Right cardiac atrium (tissue), 5 donors: ENCODE measurements at regions of chr19 and their contacts with region 1.

Region 1: GRCh38 chr19:36819130-36819630 is 19.0 kb downstream of the ZNF790 start:
- DNase-seq: no peak
- ATAC-seq: no peak
- H3K4me3 ChIP-seq: peak overlapping the region; percentile 38
- H3K27ac ChIP-seq: no peak overlapping the region
- H3K4me1 ChIP-seq: no peaks in the 10 kb centered on the region
- H3K27me3 ChIP-seq: no peaks in the 10 kb centered on the region

Region 2: GRCh38 chr19:36687214-36688056 is 131.7 kb before region 1 on chr19 and contains the start of gene ZNF567:
- intact Hi-C with region 1: no loop called
- DNase-seq: peak; percentile 98 to 99 (median 99)
- ATAC-seq: peak; percentile 99 to 100
- H3K4me3 ChIP-seq: peak within 1 kb of the TSS; percentile 61
- H3K27ac ChIP-seq: peak within 1 kb of the TSS; percentile 61
- H3K4me1 ChIP-seq: peaks cover 5% of the 10 kb centered on the region
- H3K27me3 ChIP-seq: no peaks in the 10 kb centered on the region
- total RNA-seq, gene ZNF567: 4.0 to 5.8 (median 5.3) TPM

Region 3: DNA sequence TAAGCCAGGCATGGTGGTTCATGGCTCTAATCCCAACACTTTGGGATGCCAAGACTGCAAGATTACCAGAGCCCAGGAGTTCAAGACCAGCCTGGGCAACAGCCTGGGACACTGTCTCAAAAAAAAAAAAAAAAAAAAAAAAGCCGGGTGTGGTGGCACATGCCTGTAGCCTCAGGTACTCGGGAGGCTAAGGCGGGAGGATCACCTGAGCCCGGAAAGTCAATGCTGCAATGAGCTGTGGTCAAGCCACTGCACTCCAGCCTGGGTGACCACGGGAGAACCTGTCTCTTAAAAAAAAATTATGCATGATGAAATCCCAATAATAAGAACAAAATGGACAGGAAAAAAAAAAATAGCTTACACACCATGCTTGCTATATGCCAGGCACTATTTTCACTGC is 65.9 kb before region 1 on chr19:
- intact Hi-C with region 1: no loop called
- DNase-seq: no peak
- ATAC-seq: no peak
- H3K4me3 ChIP-seq: no peak overlapping the region
- H3K27ac ChIP-seq: no peak overlapping the region
- H3K4me1 ChIP-seq: no peaks in the 10 kb centered on the region
- H3K27me3 ChIP-seq: no peaks in the 10 kb centered on the region

Region 4: GRCh38 chr19:36876993-36877938 is 58.1 kb after region 1 on chr19:
- intact Hi-C with region 1: loop called in 1 of 4 experiments (anchors 5 kb)
- DNase-seq: no peak
- ATAC-seq: no peak
- H3K4me3 ChIP-seq: peak overlapping the region; percentile 35
- H3K27ac ChIP-seq: no peak overlapping the region
- H3K4me1 ChIP-seq: no peaks in the 10 kb centered on the region
- H3K27me3 ChIP-seq: no peaks in the 10 kb centered on the region

Region 5: GRCh38 chr19:36891768-36892357 is 72.7 kb after region 1 on chr19:
- intact Hi-C with region 1: loop called in 1 of 4 experiments (anchors 10 kb)
- DNase-seq: no peak
- ATAC-seq: no peak
- H3K4me3 ChIP-seq: peak overlapping the region; percentile 1
- H3K27ac ChIP-seq: no peak overlapping the region
- H3K4me1 ChIP-seq: no peaks in the 10 kb centered on the region
- H3K27me3 ChIP-seq: no peaks in the 10 kb centered on the region